A549 (cell line): ENCODE measurements at regions of chr15 and their contacts with region 1.

Region 1: GRCh38 chr15:85412956-85413854 is 32.8 kb downstream of the AKAP13 start:
- DNase-seq: peak; percentile 93 to 98
- ATAC-seq: peak; percentile 96 to 99
- H3K4me3 ChIP-seq: peak overlapping the region; percentile 16
- H3K27ac ChIP-seq: peak overlapping the region; percentile 80 to 81
- H3K4me1 ChIP-seq: peaks cover 64% of the 10 kb centered on the region
- CTCF ChIP-seq: no peak
- EP300 ChIP-seq: peak; percentile 47 to 63; a peak in 2 of 5 replicates
- POLR2A ChIP-seq: no peak
- RAD21 ChIP-seq: peak in 1 of 2 experiments; percentile 45; a peak in 3 of 5 replicates

Region 2: DNA sequence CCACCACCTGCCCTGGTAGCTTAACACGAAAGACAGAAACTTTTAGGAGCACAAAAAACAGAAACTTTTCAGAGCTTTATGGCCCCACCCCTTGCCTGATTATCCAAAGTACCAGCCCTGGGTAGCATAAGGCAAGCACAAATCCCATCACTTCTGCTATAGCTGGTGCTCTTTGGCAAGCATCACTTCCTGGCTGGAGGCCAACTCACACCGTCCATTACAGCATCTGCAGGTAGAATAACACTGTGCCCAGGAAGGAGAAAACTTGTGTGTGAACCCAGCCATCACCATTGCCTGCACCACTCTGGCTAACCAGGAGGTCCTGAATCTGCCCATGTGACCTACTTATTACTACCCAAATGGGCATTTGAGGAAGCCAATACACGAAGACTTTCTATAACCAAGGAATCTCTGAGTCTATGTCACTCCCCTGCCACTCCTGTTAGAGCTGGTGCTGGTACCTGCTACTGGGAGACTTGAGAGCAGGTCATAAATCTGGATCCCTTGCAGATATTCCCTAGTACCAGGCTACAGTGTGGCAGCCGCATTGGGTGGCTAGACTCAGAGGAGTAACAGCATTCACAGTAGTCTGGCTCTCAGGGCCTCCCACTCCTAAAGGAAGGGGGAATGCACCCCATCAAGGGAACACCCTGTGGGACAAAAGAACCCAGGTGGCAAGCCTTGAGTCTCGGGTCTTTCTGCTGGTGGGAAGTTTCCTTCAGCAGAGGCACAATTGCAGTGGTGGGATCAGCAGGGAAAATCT is 106.1 kb before region 1 on chr15:
- CTCF ChIA-PET with region 1: interaction called, 15 read pairs
- POLR2A ChIA-PET with region 1: no interaction called
- DNase-seq: no peak
- ATAC-seq: no peak; a peak in 2 of 6 replicates
- H3K4me3 ChIP-seq: no peak overlapping the region
- H3K27ac ChIP-seq: no peak overlapping the region
- H3K4me1 ChIP-seq: no peaks in the 10 kb centered on the region
- CTCF ChIP-seq: no peak
- EP300 ChIP-seq: no peak
- POLR2A ChIP-seq: no peak
- RAD21 ChIP-seq: no peak

Region 3: GRCh38 chr15:85318048-85318731 is 95.0 kb before region 1 on chr15:
- CTCF ChIA-PET with region 1: interaction called, 22 read pairs
- POLR2A ChIA-PET with region 1: no interaction called
- DNase-seq: peak; percentile 29 to 75
- ATAC-seq: peak; percentile 70 to 81
- H3K4me3 ChIP-seq: no peak overlapping the region
- H3K27ac ChIP-seq: 0 out of 6 replicates have a peak overlapping the region, but pooled peaks have one; percentile 1 to 6
- H3K4me1 ChIP-seq: peaks cover 23% of the 10 kb centered on the region
- CTCF ChIP-seq: no peak; the same call in 2 of the 3 replicates
- EP300 ChIP-seq: no peak
- POLR2A ChIP-seq: no peak
- RAD21 ChIP-seq: no peak; a peak in 2 of 5 replicates

Region 4: DNA sequence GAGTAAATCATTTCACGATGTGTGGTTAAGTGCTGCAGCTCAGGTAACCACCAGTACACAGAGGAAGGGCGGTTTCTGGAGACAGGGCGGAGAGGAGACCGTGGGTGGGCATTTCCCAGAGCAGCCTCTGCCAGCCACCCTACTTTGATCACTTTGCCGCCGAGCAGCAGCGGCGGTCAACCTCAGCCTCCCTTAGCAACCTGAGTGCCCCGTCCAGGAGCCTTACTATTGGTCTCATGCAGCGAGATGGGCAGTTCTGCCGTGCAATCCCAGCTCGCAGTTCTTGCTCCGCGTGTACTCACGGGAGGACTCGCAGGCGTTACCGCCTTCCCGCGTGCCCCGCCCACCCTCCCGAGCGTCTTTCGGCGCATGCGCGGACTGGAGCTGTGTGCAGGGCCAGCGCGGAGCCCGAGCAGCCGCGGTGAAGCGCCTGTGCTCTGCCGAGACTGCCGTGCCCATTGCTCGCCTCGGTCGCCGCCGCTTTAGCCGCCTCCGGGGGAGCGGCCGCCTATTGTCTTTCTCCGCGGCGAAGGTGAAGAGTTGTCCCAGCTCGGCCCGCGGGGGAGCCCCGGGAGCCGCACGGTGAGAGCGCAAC is 32.9 kb before region 1 on chr15 and contains the start of gene AKAP13:
- CTCF ChIA-PET with region 1: interaction called, 19 read pairs
- POLR2A ChIA-PET with region 1: interaction called, 34 read pairs
- DNase-seq: peak; percentile 99 to 100
- ATAC-seq: peak; percentile 94 to 96
- H3K4me3 ChIP-seq: peak within 1 kb of the TSS; percentile 91
- H3K27ac ChIP-seq: peak within 1 kb of the TSS; percentile 90 to 92
- H3K4me1 ChIP-seq: peaks cover 29% of the 10 kb centered on the region; the same call in 2 of the 3 replicates
- CTCF ChIP-seq: no peak
- EP300 ChIP-seq: no peak; a peak in 1 of 5 replicates
- POLR2A ChIP-seq: peak; percentile 84
- RAD21 ChIP-seq: no peak; a peak in 1 of 5 replicates
- polyA plus RNA-seq, gene AKAP13: 28.8 and 59.7 TPM in 2 replicates

Region 5: DNA sequence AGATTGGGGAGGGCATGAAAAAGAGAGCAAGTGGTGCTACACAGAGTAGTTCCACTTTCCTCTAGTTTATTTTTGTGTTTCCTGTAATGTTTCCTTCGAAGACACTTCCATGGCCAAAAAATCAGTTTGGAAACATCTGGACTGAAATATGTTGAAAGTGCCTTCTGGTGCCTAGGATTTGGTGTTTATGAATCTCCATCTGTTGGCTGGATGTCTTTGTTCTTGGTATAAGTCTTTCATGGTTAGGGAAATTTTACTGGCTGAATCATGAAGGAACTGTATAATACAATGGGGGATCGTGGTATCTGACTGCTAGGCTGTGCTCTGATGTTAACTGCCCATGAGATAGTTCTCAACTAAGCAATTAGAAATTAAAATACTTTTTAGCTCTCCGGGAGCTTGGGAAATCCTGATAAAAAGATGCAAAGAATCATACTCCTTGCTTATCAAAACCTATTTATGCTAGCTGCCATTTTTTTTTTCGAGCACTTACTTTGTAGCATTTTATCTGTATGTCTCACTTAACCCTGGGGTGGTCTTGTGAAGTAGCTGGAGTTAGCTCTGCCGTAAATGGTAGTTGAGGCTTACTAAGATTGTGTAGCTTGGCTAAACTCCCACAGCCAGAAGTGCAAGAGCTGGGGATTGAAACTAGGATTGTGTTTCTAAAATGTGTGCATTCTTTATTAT is 10.9 kb before region 1 on chr15:
- CTCF ChIA-PET with region 1: interaction called, 32 read pairs
- POLR2A ChIA-PET with region 1: interaction called, 3 read pairs
- DNase-seq: no peak
- ATAC-seq: no peak
- H3K4me3 ChIP-seq: no peak overlapping the region
- H3K27ac ChIP-seq: 0 out of 6 replicates have a peak overlapping the region, but pooled peaks of 1 of the 2 experiments have one; percentile 1
- H3K4me1 ChIP-seq: peaks cover 59% of the 10 kb centered on the region
- CTCF ChIP-seq: no peak
- EP300 ChIP-seq: no peak
- POLR2A ChIP-seq: no peak
- RAD21 ChIP-seq: no peak

Region 6: DNA sequence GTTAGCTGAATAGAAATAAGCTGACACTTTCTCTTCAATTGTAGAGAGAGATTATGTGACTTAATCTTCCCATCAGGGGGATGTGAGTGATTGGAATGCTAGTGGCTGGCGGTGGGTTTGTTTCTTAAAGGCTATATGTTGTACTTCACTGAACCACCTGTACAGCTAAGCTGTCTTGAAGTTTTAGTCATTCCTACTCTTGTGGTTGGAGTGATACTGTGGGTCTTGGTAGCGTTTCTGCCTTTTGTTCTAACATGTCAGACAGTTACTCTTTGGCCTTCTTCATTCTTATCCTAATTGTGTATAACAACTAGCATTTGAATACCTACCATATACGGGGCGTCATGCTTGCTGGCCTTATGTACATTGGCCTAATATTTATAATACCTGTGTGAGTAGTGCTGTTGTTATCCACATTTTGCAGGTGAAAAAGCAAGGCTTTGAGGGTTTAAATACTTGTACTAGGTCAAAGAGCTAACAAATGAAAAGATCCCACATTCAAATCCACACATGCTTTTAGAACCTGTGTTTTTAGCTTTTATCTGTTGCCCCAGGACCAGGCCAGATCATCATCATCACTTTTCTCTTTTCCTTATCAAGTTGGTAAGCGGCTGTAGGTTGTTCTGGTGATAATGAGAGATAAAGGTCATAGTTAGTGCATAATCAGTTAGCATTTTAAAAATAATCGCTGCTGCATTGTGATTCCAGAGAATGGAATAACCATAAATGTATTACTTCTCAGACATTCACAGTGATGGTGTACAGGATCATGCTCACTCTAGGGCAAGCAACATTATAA is 17.4 kb after region 1 on chr15:
- CTCF ChIA-PET with region 1: interaction called, 10 read pairs
- POLR2A ChIA-PET with region 1: no interaction called
- DNase-seq: no peak
- ATAC-seq: peak in 1 of 2 experiments; percentile 13; a peak in 1 of 6 replicates
- H3K4me3 ChIP-seq: no peak overlapping the region
- H3K27ac ChIP-seq: no peak overlapping the region
- H3K4me1 ChIP-seq: peaks cover 19% of the 10 kb centered on the region
- CTCF ChIP-seq: no peak
- EP300 ChIP-seq: no peak
- POLR2A ChIP-seq: no peak
- RAD21 ChIP-seq: no peak

Region 7: GRCh38 chr15:85527895-85528294 is 114.7 kb after region 1 on chr15:
- CTCF ChIA-PET with region 1: no interaction called
- POLR2A ChIA-PET with region 1: no interaction called
- DNase-seq: peak in 1 of 2 experiments; percentile 15
- ATAC-seq: peak in 1 of 2 experiments; percentile 44; a peak in 2 of 6 replicates
- H3K4me3 ChIP-seq: no peak overlapping the region
- H3K27ac ChIP-seq: no peak overlapping the region
- H3K4me1 ChIP-seq: peaks cover 6% of the 10 kb centered on the region; the same call in 1 of the 3 replicates
- CTCF ChIP-seq: no peak
- EP300 ChIP-seq: no peak
- POLR2A ChIP-seq: no peak
- RAD21 ChIP-seq: no peak